Posterior cingulate gyrus (tissue), 11 donors: ENCODE measurements at regions of chr12 and their contacts with region 1.

Region 1: DNA sequence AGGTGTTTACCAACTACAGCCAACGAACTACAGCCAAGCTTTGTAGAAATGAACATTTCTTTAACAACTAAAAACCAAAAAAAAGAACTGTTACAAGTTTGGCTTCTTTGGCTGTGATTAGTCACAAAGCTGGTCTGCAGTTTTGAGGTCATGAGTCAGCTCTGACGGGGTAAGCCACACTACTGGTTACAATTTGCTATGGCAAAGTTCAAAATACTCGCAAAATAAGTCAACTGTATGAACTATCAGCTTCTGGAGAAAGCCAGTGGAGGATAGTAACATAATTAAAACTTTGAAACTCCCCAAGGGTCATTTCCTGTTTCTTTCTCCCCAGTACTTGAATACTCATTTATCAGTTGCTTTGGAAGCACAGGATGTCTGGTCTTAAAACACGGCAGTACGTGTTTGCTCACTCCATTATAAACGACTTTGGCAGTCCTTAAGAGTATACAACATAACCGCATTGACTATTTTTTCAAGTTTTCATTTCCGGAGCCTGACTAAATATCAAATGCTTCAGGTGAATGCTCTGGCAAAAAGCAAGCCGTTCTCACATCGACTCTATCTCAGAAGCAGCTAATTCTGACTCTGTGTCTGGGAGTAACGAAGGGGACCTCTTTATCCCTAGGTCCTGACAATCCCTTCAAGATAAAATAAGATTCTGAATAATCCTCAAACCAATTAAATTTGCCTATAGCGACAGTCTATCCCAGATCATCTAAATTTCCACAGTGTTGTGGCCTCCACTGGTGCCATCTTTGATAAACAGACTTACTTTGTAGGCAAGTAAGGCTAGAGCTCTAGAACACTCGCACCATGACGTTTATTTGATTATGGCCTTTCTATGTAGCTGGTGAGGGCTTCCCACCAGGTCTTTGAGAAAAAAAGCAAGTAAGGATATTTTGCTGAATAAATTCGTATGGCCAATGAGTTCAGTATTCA is 10.6 kb downstream of the PHLDA1 start:
- DNase-seq: no peak

Region 2: DNA sequence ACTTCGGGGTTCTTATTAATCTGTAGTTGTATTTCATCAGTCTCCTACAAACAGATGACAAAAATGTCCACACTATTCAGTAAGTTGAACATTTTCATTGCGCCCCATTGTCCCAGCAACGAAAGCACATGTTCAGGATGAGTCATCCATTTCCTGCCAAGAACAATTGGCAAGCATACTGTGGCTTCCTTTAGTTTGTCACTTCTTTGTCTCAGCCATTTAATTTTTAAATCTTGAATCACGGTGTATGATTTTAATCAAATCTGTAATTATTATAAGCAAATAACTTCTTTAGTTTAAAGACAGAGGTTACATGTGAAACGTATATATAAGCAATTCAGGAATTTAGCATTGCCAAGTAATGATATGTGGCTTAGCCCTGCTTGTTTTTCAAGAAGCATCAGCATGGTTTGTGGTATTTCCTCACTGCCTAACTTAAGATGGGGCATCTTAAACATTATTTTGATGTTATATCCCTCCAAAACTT is 298.2 kb before region 1 on chr12:
- intact Hi-C with region 1: loop called (anchors 10 kb)
- DNase-seq: peak in 6 of 10 donors; percentile 16 to 80 (median 46)

Region 3: GRCh38 chr12:76356094-76356493 is 335.1 kb after region 1 on chr12:
- intact Hi-C with region 1: no loop called
- DNase-seq: no peak